ENCODE measurements at regions of chr6 and their contacts with region 1.

Region 1: GRCh38 chr6:10747251-10747972 is at the start of gene TMEM14B:
- DNase-seq: peak; percentile 97
- ATAC-seq: peak; percentile 98
- H3K4me3 ChIP-seq: peak within 1 kb of the TSS; percentile 73 to 87 (median 84)
- H3K27ac ChIP-seq: peak within 1 kb of the TSS; percentile 75
- H3K4me1 ChIP-seq: peaks cover 29% of the 10 kb centered on the region
- H3K27me3 ChIP-seq: no peaks in the 10 kb centered on the region
- CTCF ChIP-seq: peak; percentile 24; the same call in 1 of the 2 replicates
- EP300 ChIP-seq: peak in 1 of 2 experiments; percentile 37; a peak in 3 of 4 replicates
- POLR2A ChIP-seq: peak; percentile 89 to 95
- RAD21 ChIP-seq: peak; percentile 25
- total RNA-seq, gene TMEM14B: 191 and 200 TPM in 2 replicates

Region 2: GRCh38 chr6:10505529-10505928 is 241.9 kb before region 1 on chr6:
- CTCF ChIA-PET with region 1: no interaction called
- POLR2A ChIA-PET with region 1: no interaction called
- in situ Hi-C with region 1: no loop called
- intact Hi-C with region 1: loop called (anchors 5 kb)
- DNase-seq: peak; percentile 99
- ATAC-seq: peak; percentile 99
- H3K4me3 ChIP-seq: no peak overlapping the region
- H3K27ac ChIP-seq: no peak overlapping the region
- H3K4me1 ChIP-seq: peaks cover 24% of the 10 kb centered on the region
- H3K27me3 ChIP-seq: peaks cover 0 to 36% of the 10 kb centered on the region in 2 experiments; a peak in 4 of 5 replicates
- CTCF ChIP-seq: peak; percentile 64
- EP300 ChIP-seq: peak; percentile 91 to 95
- POLR2A ChIP-seq: no peak
- RAD21 ChIP-seq: peak; percentile 64; the same call in 1 of the 2 replicates

Region 3: GRCh38 chr6:10733151-10733715 is 14.2 kb before region 1 on chr6:
- CTCF ChIA-PET with region 1: no interaction called
- POLR2A ChIA-PET with region 1: interaction called, 18 read pairs
- in situ Hi-C with region 1: no loop called
- intact Hi-C with region 1: no loop called
- DNase-seq: no peak
- ATAC-seq: peak; percentile 36; the same call in 2 of the 3 replicates
- H3K4me3 ChIP-seq: no peak overlapping the region
- H3K27ac ChIP-seq: no peak overlapping the region
- H3K4me1 ChIP-seq: peaks cover 11% of the 10 kb centered on the region
- H3K27me3 ChIP-seq: no peaks in the 10 kb centered on the region
- CTCF ChIP-seq: no peak
- EP300 ChIP-seq: no peak
- POLR2A ChIP-seq: no peak
- RAD21 ChIP-seq: no peak

Measured in HepG2 (cell line).